Gastrocnemius medialis (tissue), 4 donors: ENCODE measurements at regions of chr6 and their contacts with region 1.

Region 1: DNA sequence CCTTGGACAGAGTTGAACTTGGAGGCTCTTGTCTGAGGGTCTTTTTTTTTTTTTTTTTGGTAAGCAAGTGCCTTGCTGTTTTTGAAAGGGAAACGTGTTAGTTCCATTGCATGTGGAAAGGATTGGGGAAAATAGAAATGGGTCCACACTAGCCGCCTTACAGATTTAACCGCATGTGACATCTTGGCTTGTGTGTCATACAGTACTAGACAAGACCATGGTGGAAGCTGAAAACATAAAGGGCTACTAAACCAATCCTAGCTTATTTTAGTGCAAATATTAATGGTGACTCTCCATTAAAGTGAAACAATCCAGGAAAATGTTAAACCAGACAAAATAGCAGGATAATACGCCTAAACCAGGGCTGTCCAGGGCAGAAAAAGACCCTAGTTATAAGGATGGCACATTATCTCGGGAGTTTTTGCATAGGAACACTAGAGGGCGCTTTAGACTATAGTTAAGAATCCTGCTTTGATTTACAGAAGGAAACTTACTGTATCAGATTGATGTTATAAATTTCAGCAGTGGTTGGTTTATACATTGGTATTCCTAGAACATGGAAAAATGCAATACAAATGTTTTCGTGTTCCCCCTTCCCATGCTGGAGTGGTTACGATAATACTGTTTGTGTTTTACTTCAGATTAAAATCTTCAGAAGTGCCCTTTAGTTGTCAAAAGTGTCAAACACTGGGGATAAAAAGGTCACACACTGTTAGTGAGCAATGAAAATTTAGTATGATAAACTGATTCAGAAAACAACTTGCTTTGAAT is 59.8 kb upstream of the DEK start:
- DNase-seq: no peak
- ATAC-seq: peak; percentile 62 to 83
- H3K4me3 ChIP-seq: no peak overlapping the region
- H3K27ac ChIP-seq: no peak overlapping the region
- H3K4me1 ChIP-seq: peaks cover 15 to 22% of the 10 kb centered on the region in 2 donors
- H3K27me3 ChIP-seq: no peaks in the 10 kb centered on the region
- CTCF ChIP-seq: peak; percentile 76 to 83 (median 80)
- POLR2A ChIP-seq: no peak

Region 2: DNA sequence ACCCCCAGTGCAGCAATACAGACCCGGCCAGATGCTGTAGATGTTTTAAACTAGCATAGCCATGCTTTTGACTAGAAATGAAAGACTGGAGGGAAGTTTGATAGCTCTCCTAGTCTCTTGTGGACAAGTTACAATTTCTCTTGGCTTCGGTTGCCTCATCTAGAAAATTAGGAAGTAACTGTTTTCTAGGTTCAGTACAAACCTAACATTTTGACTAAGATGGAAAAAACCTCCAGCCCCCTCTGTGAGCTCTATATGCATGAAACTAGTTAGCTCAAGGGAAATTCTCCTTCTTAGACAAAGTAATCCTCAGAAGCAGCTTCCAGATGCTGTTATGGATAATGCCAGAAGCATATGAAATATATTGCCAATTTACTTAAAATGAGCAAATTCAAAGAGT is 149.6 kb after region 1 on chr6:
- in situ Hi-C with region 1: loop called in 1 of 4 experiments (anchors 25 kb)
- intact Hi-C with region 1: no loop called
- DNase-seq: no peak
- ATAC-seq: no peak
- H3K4me3 ChIP-seq: no peak overlapping the region
- H3K27ac ChIP-seq: no peak overlapping the region
- H3K4me1 ChIP-seq: peaks cover 6 to 18% of the 10 kb centered on the region in 2 donors
- H3K27me3 ChIP-seq: no peaks in the 10 kb centered on the region
- CTCF ChIP-seq: no peak
- POLR2A ChIP-seq: no peak

Region 3: GRCh38 chr6:18496462-18496861 is 172.3 kb after region 1 on chr6:
- in situ Hi-C with region 1: loop called in 1 of 4 experiments (anchors 5 kb)
- intact Hi-C with region 1: no loop called
- DNase-seq: no peak
- ATAC-seq: no peak
- H3K4me3 ChIP-seq: no peak overlapping the region
- H3K27ac ChIP-seq: no peak overlapping the region
- H3K4me1 ChIP-seq: no peaks in the 10 kb centered on the region
- H3K27me3 ChIP-seq: no peaks in the 10 kb centered on the region
- CTCF ChIP-seq: no peak
- POLR2A ChIP-seq: no peak